ENCODE measurements at regions of chr11 and their contacts with region 1.

Region 1: GRCh38 chr11:85759915-85760314 is 51.0 kb downstream of the SYTL2 start:
- DNase-seq: no peak
- H3K4me3 Mint-ChIP-seq: no peak overlapping the region
- H3K27ac Mint-ChIP-seq: no peak overlapping the region
- H3K4me1 Mint-ChIP-seq: peaks cover 64% of the 10 kb centered on the region
- H3K27me3 Mint-ChIP-seq: no peaks in the 10 kb centered on the region

Region 2: GRCh38 chr11:85732965-85733364 is 26.9 kb before region 1 on chr11:
- intact Hi-C with region 1: no loop called
- DNase-seq: no peak
- H3K4me3 Mint-ChIP-seq: no peak overlapping the region
- H3K27ac Mint-ChIP-seq: no peak overlapping the region
- H3K4me1 Mint-ChIP-seq: peaks cover 7% of the 10 kb centered on the region
- H3K27me3 Mint-ChIP-seq: peaks cover 2% of the 10 kb centered on the region

Region 3: DNA sequence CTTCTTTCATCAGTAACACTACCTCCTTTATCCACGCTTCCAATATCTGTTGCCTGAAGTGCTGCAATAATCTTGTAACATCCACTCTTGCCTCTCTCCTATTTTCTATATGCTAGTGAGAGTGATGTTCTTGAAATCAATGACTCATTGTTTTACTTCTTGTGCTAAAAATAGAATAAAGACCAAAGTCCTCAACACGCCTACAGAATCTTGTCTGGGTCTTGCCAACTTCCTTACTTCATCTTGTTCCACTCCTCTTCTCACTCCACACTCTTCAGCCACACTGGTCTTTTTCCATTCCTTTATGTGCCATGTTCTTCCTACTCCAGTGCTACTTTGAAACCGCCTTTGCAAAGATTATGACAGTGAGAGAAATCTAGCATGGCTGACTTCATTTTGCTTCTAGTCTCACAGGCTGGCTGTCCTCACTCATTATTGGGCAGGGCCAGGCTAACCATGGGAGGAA is 751.2 kb after region 1 on chr11:
- intact Hi-C with region 1: loop called (anchors 10 kb)
- DNase-seq: no peak
- H3K4me3 Mint-ChIP-seq: no peak overlapping the region
- H3K27ac Mint-ChIP-seq: no peak overlapping the region
- H3K4me1 Mint-ChIP-seq: no peaks in the 10 kb centered on the region
- H3K27me3 Mint-ChIP-seq: peaks cover under 1% of the 10 kb centered on the region

Measured in activated T-helper 2 cell treated with anti-CD3 and anti-CD28 coated beads, Interferon-gamma antibody, Interleukin-2, Interleukin-4, amounts not matched to agents 10 μg/mL and 5 μg/mL and 100 μg/mL, durations not matched to agents 14 hours and 24 hours and 36 hours (primary cell).